ENCODE measurements at regions of chr17 and their contacts with region 1.

Region 1: GRCh38 chr17:28366605-28367004 is 1.6 kb upstream of the SEBOX start:
- DNase-seq: no peak
- ATAC-seq: no peak
- H3K4me3 ChIP-seq: no peak overlapping the region
- H3K27ac ChIP-seq: no peak overlapping the region
- H3K4me1 ChIP-seq: no peaks in the 10 kb centered on the region
- H3K27me3 ChIP-seq: no peaks in the 10 kb centered on the region
- CTCF ChIP-seq: no peak

Region 2: DNA sequence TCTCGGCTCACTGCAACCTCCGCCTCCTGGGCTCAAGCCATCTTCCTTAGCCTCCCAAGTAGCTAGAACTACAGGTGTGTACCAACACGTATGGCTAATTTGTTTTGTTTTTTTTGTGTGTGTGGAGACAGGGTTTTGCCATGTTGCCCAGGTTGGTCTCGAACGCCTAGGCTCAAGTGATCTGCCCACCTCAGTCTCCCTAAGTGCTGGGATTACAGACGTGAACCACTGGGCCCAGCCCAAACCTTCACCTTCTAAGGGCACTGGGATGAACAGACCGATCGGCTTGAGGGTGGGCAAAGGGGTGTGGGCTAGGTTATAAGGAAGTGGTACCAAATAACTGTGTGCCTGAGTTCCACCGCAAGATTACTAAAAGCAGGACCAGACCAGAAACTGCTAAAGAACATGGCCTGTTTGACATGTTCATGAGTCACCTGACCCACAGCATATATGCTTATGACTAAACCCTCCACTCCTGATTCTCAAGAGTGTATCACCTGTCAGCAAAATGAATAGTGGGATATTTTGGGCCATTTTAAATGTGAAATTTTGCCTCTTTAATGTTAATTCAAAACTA is 39.5 kb before region 1 on chr17:
- CTCF ChIA-PET with region 1: no interaction called
- POLR2A ChIA-PET with region 1: no interaction called
- intact Hi-C with region 1: no loop called
- DNase-seq: peak; percentile 66
- ATAC-seq: peak; percentile 85
- H3K4me3 ChIP-seq: peak overlapping the region; percentile 24
- H3K27ac ChIP-seq: peak overlapping the region; percentile 94
- H3K4me1 ChIP-seq: peaks cover 53% of the 10 kb centered on the region
- H3K27me3 ChIP-seq: no peaks in the 10 kb centered on the region
- CTCF ChIP-seq: no peak

Region 3: GRCh38 chr17:28416703-28417311 is 50.2 kb after region 1 on chr17:
- CTCF ChIA-PET with region 1: no interaction called
- POLR2A ChIA-PET with region 1: interaction called, 3 read pairs
- intact Hi-C with region 1: loop called (anchors 2 kb)
- DNase-seq: peak; percentile 62
- ATAC-seq: peak; percentile 82
- H3K4me3 ChIP-seq: no peak overlapping the region
- H3K27ac ChIP-seq: no peak overlapping the region
- H3K4me1 ChIP-seq: no peaks in the 10 kb centered on the region
- H3K27me3 ChIP-seq: no peaks in the 10 kb centered on the region
- CTCF ChIP-seq: peak; percentile 77

Region 4: DNA sequence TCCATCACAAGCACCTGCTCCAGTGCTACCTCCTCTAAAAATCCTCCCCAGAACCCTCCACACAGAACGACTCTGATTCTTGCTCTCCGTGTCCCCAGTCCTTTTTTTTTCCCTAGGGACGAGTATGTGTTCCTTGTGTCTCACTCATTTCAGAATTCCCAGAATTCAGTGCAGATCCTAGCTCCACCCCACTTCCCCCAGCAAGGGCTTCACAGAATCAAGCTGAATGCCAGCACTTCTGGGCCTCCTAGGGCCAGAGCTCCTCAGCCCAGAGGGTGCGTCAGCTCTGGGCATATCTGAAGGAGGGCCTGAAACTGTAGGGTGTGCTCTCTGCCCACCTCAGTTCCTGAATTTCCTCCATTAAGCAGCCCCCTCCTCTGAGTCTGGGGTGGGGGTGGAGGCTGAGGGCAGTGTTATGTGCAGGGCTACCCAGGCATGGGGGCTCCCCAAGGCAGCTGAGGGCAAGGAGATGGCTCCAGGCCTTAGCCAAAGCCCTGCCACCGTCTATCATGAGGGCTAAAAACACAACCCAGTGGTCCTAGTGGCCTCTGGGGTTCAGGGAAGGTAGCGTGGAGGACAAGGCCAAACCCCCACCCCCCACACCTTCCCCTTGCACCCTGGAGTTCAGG is 179.3 kb after region 1 on chr17:
- CTCF ChIA-PET with region 1: no interaction called
- POLR2A ChIA-PET with region 1: no interaction called
- intact Hi-C with region 1: no loop called
- DNase-seq: no peak
- ATAC-seq: no peak
- H3K4me3 ChIP-seq: no peak overlapping the region
- H3K27ac ChIP-seq: no peak overlapping the region
- H3K4me1 ChIP-seq: peaks cover 4% of the 10 kb centered on the region; the same call in 1 of the 2 replicates
- H3K27me3 ChIP-seq: no peaks in the 10 kb centered on the region
- CTCF ChIP-seq: no peak

Measured in PC-3 (cell line).